CD4-positive, alpha-beta T cell (primary cell): ENCODE measurements at regions of chr7 and their contacts with region 1.

Region 1: GRCh38 chr7:77351539-77352004 is 64.6 kb downstream of the GSAP start:
- DNase-seq: peak; percentile 16 to 90 (median 42)
- ATAC-seq: peak; percentile 80
- H3K4me3 ChIP-seq: peak overlapping the region; percentile 23
- H3K4me3 Mint-ChIP-seq: peak overlapping the region; percentile 79
- H3K27ac ChIP-seq: no peak overlapping the region
- H3K27ac Mint-ChIP-seq: peak overlapping the region; percentile 86
- H3K4me1 ChIP-seq: peaks cover 36% of the 10 kb centered on the region
- H3K4me1 Mint-ChIP-seq: peaks cover 77% of the 10 kb centered on the region
- H3K27me3 ChIP-seq: no peaks in the 10 kb centered on the region
- H3K27me3 Mint-ChIP-seq: no peaks in the 10 kb centered on the region
- CTCF ChIP-seq: no peak

Region 2: DNA sequence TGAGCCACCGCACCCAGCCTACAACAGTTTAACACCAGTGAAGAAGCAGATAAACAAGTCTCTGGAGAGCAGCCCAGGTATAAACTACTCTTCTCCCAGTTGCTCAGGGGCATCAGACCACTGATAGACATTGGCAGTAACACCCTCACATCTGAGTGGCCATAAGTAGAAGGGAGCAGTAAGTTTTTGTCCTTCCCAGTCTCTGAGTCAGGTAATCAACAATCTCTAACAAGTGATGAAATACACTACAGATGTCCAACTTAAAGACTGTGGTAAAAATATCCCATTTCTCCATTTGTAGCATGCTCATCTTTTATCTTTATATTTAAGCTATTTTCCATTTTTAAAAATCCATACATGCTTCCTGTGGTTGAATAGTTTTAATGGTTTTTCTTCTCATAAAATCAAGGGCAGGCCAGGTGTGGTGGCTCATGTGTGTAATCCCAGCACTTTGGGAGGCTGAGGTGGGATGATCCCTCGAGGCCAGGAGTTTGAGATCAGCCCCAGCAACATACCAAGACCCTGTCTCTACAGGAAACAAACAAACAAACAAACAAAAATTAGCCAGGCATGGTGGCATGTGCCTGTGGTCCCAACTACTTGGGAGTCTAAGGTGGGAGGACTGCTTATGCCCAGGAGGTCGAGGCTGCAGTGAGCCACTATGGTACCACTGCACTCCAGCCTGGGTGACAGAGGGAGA is 14.0 kb before region 1 on chr7:
- CTCF ChIA-PET with region 1: interaction called, 3 read pairs
- POLR2A ChIA-PET with region 1: interaction called, 3 read pairs
- intact Hi-C with region 1: loop called in 1 of 2 experiments (anchors 1 kb)
- DNase-seq: no peak
- ATAC-seq: no peak
- H3K4me3 ChIP-seq: no peak overlapping the region
- H3K4me3 Mint-ChIP-seq: no peak overlapping the region
- H3K27ac ChIP-seq: no peak overlapping the region
- H3K27ac Mint-ChIP-seq: no peak overlapping the region
- H3K4me1 ChIP-seq: peaks cover 15% of the 10 kb centered on the region
- H3K4me1 Mint-ChIP-seq: peaks cover 37% of the 10 kb centered on the region
- H3K27me3 ChIP-seq: no peaks in the 10 kb centered on the region
- H3K27me3 Mint-ChIP-seq: no peaks in the 10 kb centered on the region
- CTCF ChIP-seq: no peak

Region 3: GRCh38 chr7:77409739-77410547 is 58.4 kb after region 1 on chr7:
- CTCF ChIA-PET with region 1: no interaction called
- POLR2A ChIA-PET with region 1: interaction called, 14 read pairs
- intact Hi-C with region 1: loop called in 1 of 2 experiments (anchors 5 kb)
- DNase-seq: peak in 3 of 14 experiments; percentile 22 to 65 (median 52)
- ATAC-seq: no peak
- H3K4me3 ChIP-seq: no peak overlapping the region
- H3K4me3 Mint-ChIP-seq: no peak overlapping the region
- H3K27ac ChIP-seq: peak overlapping the region in 1 of 2 donors; percentile 32
- H3K27ac Mint-ChIP-seq: no peak overlapping the region
- H3K4me1 ChIP-seq: peaks cover 6% of the 10 kb centered on the region
- H3K4me1 Mint-ChIP-seq: peaks cover 37% of the 10 kb centered on the region
- H3K27me3 ChIP-seq: no peaks in the 10 kb centered on the region
- H3K27me3 Mint-ChIP-seq: no peaks in the 10 kb centered on the region
- CTCF ChIP-seq: no peak

Region 4: GRCh38 chr7:77415823-77416622 is 64.5 kb after region 1 on chr7 and contains the start of gene GSAP:
- CTCF ChIA-PET with region 1: no interaction called
- POLR2A ChIA-PET with region 1: interaction called, 14 read pairs
- intact Hi-C with region 1: loop called in 1 of 2 experiments (anchors 2 kb)
- DNase-seq: peak; percentile 18 to 78 (median 42)
- ATAC-seq: peak; percentile 66
- H3K4me3 ChIP-seq: peak within 1 kb of the TSS; percentile 76
- H3K4me3 Mint-ChIP-seq: peak within 1 kb of the TSS; percentile 87
- H3K27ac ChIP-seq: peak within 1 kb of the TSS; percentile 30 to 33
- H3K27ac Mint-ChIP-seq: peak within 1 kb of the TSS; percentile 76
- H3K4me1 ChIP-seq: peaks cover 15% of the 10 kb centered on the region
- H3K4me1 Mint-ChIP-seq: peaks cover 52% of the 10 kb centered on the region
- H3K27me3 ChIP-seq: no peaks in the 10 kb centered on the region
- H3K27me3 Mint-ChIP-seq: no peaks in the 10 kb centered on the region
- CTCF ChIP-seq: peak; percentile 22
- total RNA-seq, gene GSAP: 19.1 to 19.5 TPM

Region 5: DNA sequence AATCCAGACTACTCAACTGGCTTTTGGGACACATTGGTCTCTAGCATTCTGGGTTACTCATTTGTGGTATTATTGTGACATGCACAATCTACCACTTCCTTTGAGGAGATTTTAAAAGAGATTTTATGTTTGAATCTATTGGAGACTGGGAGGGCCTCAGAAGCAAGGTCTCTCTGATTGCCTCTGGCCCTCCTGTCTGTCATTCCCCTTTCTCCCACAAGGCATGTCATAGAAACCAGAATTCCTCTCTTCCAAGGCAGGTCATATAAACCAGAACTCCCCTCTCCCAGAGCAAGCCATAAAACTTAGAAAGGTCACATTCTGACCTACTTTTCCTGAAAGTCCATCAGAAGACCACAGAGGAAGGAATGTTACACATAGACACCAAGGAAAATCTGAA is 1224.7 kb after region 1 on chr7:
- CTCF ChIA-PET with region 1: no interaction called
- POLR2A ChIA-PET with region 1: no interaction called
- intact Hi-C with region 1: no loop called
- DNase-seq: no peak
- ATAC-seq: no peak
- H3K4me3 ChIP-seq: no peak overlapping the region
- H3K4me3 Mint-ChIP-seq: no peak overlapping the region
- H3K27ac ChIP-seq: no peak overlapping the region
- H3K27ac Mint-ChIP-seq: no peak overlapping the region
- H3K4me1 ChIP-seq: no peaks in the 10 kb centered on the region
- H3K4me1 Mint-ChIP-seq: no peaks in the 10 kb centered on the region
- H3K27me3 ChIP-seq: no peaks in the 10 kb centered on the region
- H3K27me3 Mint-ChIP-seq: no peaks in the 10 kb centered on the region
- CTCF ChIP-seq: no peak